Sigmoid colon (tissue), 7 donors: ENCODE measurements at regions of chr22 and their contacts with region 1.

Region 1: DNA sequence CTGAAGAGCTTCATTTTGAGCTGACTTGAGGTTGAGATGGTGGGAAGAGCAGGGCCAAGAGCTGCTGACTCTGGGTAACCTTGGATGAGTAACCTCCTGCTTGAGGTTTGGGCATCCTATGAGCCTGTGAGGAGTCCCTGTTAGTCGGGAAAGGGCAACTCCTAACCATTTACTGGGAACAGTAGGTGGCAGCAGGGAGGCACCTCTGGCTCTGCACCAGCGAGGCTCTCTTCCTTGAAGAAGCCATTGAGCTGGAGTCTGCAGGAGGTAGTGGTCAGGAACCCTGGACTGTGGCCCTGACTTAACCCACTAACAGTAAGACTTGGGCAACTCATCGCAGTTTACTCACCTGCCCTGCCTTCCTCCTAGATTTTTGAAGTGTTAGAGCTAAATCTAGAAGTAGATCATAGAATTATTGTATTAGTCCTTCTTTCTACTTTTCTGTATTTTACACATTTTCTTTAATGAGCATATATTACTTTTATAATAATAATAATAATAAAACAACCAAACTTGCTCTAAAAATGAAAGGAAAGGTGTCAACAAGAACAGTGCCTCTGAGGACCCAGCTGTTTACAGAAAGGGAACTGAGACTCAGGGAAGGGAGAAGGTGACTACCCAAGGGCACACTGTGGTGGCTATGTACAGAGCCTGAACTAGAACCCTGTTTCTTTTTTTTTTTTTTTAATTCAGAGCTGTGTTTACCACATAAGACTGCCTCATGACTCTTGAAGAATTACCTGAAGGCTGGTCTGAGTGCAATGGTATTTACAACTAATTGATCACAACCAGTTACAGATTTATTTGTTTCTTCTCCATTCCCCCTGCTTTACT is 47.5 kb downstream of the MEI1 start:
- DNase-seq: peak; percentile 85
- H3K4me3 ChIP-seq: no peak overlapping the region
- H3K27ac ChIP-seq: no peak overlapping the region
- H3K4me1 ChIP-seq: no peaks in the 10 kb centered on the region
- H3K27me3 ChIP-seq: peaks cover 0 to 4% (median 0%) of the 10 kb centered on the region in 3 donors
- CTCF ChIP-seq: peak; percentile 35 to 73 (median 62)
- EP300 ChIP-seq: no peak
- POLR2A ChIP-seq: no peak

Region 2: GRCh38 chr22:41517172-41518047 is 229.4 kb before region 1 on chr22:
- intact Hi-C with region 1: no loop called
- DNase-seq: peak; percentile 89
- H3K4me3 ChIP-seq: no peak overlapping the region
- H3K27ac ChIP-seq: peak overlapping the region; percentile 55 to 75 (median 62)
- H3K4me1 ChIP-seq: peaks cover 0 to 24% (median 19%) of the 10 kb centered on the region in 4 donors
- H3K27me3 ChIP-seq: no peaks in the 10 kb centered on the region
- CTCF ChIP-seq: peak; percentile 86 to 92 (median 90)
- EP300 ChIP-seq: no peak
- POLR2A ChIP-seq: no peak

Region 3: DNA sequence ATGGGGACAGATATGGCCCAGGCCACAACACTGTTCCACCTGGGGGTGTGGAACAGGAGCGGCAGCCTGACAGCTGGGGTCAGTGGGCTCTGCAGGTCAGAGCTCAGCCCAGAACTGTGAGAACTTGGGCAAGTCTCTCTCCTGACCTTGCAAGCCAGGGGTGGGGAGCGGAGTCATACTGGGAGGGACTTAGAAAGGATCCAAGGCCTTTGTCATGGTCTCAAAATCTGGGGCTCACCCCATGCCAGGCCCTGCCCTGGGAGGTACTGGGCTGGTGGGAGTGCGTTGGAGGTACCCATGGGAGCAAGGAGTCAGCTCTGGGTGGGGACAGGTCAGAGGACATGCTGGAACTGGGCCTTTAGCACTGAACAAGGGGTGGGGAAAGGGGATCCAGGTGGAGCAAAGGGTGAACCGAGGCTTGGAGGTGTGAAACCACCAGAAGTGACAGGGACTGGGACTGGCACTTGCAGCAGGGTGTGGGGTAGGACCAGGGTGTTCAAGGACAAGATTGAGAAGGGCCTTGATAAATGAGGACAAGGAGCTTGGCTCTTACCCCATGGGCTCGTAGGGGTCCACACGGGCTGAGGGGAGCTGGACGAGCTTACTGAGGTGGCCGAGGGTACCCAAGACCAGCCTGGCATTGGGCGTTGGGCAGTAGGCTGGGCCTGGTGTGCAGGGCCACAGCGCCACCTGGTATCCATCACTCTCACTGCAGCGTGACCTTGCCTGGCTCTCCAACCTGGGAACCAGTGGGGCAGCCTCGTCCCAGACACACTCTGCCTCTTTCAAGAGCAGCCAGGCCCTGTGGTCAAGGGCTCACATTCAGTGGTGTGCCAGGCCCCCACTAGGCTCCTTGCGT is 149.8 kb before region 1 on chr22:
- intact Hi-C with region 1: no loop called
- DNase-seq: peak; percentile 79
- H3K4me3 ChIP-seq: no peak overlapping the region
- H3K27ac ChIP-seq: peak overlapping the region in 1 of 4 donors; percentile 13
- H3K4me1 ChIP-seq: no peaks in the 10 kb centered on the region
- H3K27me3 ChIP-seq: no peaks in the 10 kb centered on the region
- CTCF ChIP-seq: peak; percentile 61 to 81 (median 71)
- EP300 ChIP-seq: no peak
- POLR2A ChIP-seq: no peak

Region 4: GRCh38 chr22:41656556-41656955 is 90.2 kb before region 1 on chr22:
- intact Hi-C with region 1: no loop called
- DNase-seq: no peak
- H3K4me3 ChIP-seq: no peak overlapping the region
- H3K27ac ChIP-seq: no peak overlapping the region
- H3K4me1 ChIP-seq: no peaks in the 10 kb centered on the region
- H3K27me3 ChIP-seq: no peaks in the 10 kb centered on the region
- CTCF ChIP-seq: no peak
- EP300 ChIP-seq: no peak
- POLR2A ChIP-seq: no peak

Region 5: GRCh38 chr22:41857155-41857859 is 110.5 kb after region 1 on chr22:
- intact Hi-C with region 1: loop called (anchors 5 kb)
- DNase-seq: no peak
- H3K4me3 ChIP-seq: no peak overlapping the region
- H3K27ac ChIP-seq: peak overlapping the region in 1 of 4 donors; percentile 41
- H3K4me1 ChIP-seq: peaks cover 0 to 26% (median 7%) of the 10 kb centered on the region in 4 donors
- H3K27me3 ChIP-seq: no peaks in the 10 kb centered on the region
- CTCF ChIP-seq: peak; percentile 20 to 50 (median 44)
- EP300 ChIP-seq: no peak
- POLR2A ChIP-seq: no peak

Region 6: DNA sequence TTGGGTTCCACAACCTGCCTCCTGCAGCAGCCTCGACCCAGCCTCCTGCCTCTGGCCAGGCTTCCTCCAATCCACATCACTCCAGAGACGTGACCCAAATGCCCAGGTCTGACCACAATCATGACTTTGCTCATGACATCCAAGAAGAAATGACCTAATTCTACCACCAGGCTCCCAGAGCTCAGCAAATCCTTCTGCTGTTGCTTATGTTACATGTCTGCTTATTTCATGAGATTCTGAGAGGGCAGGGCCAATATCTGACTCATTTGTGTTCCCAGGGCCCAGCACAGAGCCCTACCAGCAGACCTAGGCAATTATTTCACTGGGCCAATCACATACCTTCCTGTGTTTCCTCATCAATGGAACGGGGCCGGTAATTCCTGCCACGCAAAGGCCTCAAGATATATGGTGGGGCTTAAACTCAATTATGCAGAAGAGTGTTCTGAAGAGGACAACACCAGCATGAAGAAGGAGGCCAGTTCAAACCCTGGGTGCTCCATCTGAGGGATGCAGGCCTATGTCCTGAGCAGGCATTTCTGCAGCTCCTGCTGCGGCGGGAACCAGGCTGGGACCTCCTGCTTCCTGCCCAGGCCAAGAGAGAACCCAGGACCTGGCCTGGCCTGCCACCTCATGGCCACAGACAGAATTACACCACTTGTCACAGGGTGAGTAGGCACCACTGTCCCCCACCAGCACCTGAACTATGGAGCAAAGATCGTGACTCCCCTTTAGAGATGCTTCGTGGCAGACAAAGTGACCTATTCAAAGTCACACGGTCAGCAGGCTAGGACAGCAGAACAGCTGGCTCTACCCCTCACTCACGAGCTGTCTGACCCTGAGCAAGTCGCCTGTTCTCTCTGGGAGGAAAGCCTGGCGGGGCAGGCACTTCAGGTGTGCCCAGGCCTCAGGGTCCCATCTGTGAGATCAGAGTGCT is 194.3 kb after region 1 on chr22:
- intact Hi-C with region 1: loop called (anchors 1 kb)
- DNase-seq: peak; percentile 91
- H3K4me3 ChIP-seq: no peak overlapping the region
- H3K27ac ChIP-seq: peak overlapping the region; percentile 20 to 67 (median 42)
- H3K4me1 ChIP-seq: peaks cover 0 to 22% (median 17%) of the 10 kb centered on the region in 4 donors
- H3K27me3 ChIP-seq: no peaks in the 10 kb centered on the region
- CTCF ChIP-seq: peak; percentile 90 to 98 (median 94)
- EP300 ChIP-seq: no peak
- POLR2A ChIP-seq: no peak